HEK293 (cell line): ENCODE measurements at regions of chr1 and their contacts with region 1.

Region 1: GRCh38 chr1:46223472-46223943 is 20.4 kb downstream of the LURAP1 start:
- H3K4me3 ChIP-seq: no peak overlapping the region
- H3K27ac ChIP-seq: no peak overlapping the region
- H3K4me1 ChIP-seq: no peaks in the 10 kb centered on the region
- CTCF ChIP-seq: peak; percentile 93

Region 2: DNA sequence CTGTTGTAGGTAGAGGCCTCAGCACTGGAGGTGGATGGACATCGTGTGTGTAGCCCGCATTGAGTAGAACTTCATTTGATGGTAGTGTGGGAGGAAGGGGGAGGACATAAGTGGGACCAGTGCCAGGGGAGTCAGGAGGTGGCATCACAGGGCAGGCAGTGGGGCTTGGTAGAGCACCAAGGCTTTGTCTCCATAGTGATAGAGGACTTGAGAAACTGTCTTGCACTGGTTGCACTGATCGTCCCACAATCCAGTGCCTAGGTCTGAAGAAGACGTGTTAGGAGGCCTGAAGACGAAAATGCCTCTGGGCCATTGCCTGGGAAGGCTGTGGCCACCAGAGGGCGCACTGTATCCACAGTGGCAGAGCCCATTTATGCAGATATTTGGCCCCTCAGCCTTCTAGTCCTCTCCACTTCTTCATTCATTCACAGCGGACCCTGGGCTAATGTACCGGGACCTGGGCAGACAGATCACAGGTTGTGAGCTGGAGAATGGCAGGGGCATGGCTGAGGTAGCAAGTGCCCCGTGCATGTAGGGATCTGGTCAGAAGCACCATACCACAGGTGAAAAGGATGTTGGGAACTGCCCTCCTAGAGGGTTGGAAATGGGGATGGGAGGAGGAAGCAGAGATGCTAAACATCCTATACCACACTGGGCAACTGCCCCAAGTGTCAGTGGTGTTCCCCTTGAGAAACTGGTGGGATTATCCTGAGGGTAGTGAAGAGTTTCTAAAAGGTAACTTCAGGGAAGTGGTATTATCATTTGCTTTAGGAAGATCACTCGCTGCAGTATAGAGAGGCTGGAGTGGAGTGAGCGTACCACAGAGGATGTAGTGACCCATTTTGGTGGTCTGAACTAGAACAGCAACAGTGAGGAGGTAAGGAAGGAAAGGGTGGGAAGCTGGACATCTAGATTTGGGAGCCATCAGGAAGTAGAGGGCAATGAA is 186.3 kb before region 1 on chr1:
- CTCF ChIA-PET with region 1: interaction called, 70 read pairs
- POLR2A ChIA-PET with region 1: interaction called, 4 read pairs
- H3K4me3 ChIP-seq: no peak overlapping the region
- H3K27ac ChIP-seq: no peak overlapping the region
- H3K4me1 ChIP-seq: peaks cover 4% of the 10 kb centered on the region
- CTCF ChIP-seq: peak; percentile 97

Region 3: GRCh38 chr1:46179138-46180081 is 44.1 kb before region 1 on chr1:
- CTCF ChIA-PET with region 1: interaction called, 71 read pairs
- POLR2A ChIA-PET with region 1: interaction called, 4 read pairs
- H3K4me3 ChIP-seq: no peak overlapping the region
- H3K27ac ChIP-seq: no peak overlapping the region
- H3K4me1 ChIP-seq: peaks cover 3% of the 10 kb centered on the region; the same call in 1 of the 2 replicates
- CTCF ChIP-seq: peak; percentile 99

Region 4: DNA sequence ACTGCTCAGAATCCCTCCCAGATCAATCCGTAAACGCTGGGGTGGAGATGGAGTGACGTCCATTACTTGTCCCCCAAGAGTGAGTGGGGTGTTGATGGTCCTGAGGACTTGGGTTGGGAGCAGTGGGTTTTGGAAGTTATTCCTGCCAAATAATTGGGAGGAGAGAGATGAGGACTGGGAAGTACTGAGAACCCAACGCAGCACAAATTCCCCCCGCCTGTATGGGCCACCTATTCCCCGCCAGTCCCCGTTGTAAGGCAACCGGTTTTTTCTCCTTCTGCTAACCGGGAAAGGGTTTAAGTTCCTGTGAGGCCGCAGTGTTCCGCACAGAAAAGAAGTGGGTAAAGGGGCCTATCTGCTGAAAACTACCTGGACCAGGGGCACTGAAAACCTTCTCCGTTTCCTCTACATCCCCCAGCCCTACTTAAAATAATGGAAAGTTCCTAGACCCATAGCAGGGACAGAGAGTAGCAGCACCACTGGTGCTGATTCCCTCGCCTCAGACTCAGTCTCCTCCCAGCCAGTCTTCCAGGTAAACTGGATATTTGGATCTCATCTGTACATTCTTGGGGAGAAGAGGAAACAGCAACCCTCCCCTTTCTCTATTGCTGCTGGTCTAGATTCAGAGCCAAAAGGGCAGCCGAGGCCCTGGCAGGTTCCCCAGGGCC is 19.6 kb before region 1 on chr1:
- CTCF ChIA-PET with region 1: interaction called, 49 read pairs
- POLR2A ChIA-PET with region 1: interaction called, 3 read pairs
- H3K4me3 ChIP-seq: peak overlapping the region; percentile 79
- H3K27ac ChIP-seq: peak overlapping the region; percentile 45; the same call in 1 of the 2 replicates
- H3K4me1 ChIP-seq: no peaks in the 10 kb centered on the region
- CTCF ChIP-seq: no peak

Region 5: GRCh38 chr1:46236882-46237281 is 13.4 kb after region 1 on chr1:
- CTCF ChIA-PET with region 1: interaction called, 16 read pairs
- POLR2A ChIA-PET with region 1: interaction called, 3 read pairs
- H3K4me3 ChIP-seq: no peak overlapping the region
- H3K27ac ChIP-seq: no peak overlapping the region
- H3K4me1 ChIP-seq: no peaks in the 10 kb centered on the region
- CTCF ChIP-seq: no peak